Naive thymus-derived CD4-positive, alpha-beta T cell (primary cell): ENCODE measurements at regions of chr1 and their contacts with region 1.

Region 1: DNA sequence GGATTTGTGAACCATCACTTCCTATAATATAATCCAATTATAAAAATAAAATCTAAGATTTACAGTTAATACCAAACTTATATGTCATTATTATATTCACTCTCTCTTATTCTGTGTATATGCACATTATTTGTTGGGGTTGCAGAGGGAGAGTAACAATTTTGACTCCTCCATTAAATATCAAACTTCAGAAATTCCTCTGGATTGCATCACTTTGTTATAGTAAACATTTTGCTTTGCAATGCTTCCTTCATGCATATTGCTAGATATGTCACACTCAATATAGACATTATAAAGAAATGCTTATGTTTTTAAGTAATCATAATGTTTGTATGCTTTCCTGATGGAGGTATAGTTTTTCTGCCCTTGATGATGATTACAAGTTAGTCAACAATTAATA is 999.0 kb upstream of the ADGRL2 start:
- DNase-seq: no peak
- ATAC-seq: no peak
- H3K4me3 ChIP-seq: no peak overlapping the region
- H3K4me3 Mint-ChIP-seq: no peak overlapping the region
- H3K27ac ChIP-seq: no peak overlapping the region
- H3K27ac Mint-ChIP-seq: no peak overlapping the region
- H3K4me1 ChIP-seq: no peaks in the 10 kb centered on the region
- H3K4me1 Mint-ChIP-seq: no peaks in the 10 kb centered on the region
- H3K27me3 ChIP-seq: no peaks in the 10 kb centered on the region
- H3K27me3 Mint-ChIP-seq: no peaks in the 10 kb centered on the region

Region 2: GRCh38 chr1:80827666-80828065 is 26.0 kb after region 1 on chr1:
- CTCF ChIA-PET with region 1: no interaction called
- POLR2A ChIA-PET with region 1: no interaction called
- intact Hi-C with region 1: no loop called
- DNase-seq: no peak
- ATAC-seq: no peak
- H3K4me3 ChIP-seq: no peak overlapping the region
- H3K4me3 Mint-ChIP-seq: no peak overlapping the region
- H3K27ac ChIP-seq: no peak overlapping the region
- H3K27ac Mint-ChIP-seq: no peak overlapping the region
- H3K4me1 ChIP-seq: no peaks in the 10 kb centered on the region
- H3K4me1 Mint-ChIP-seq: no peaks in the 10 kb centered on the region
- H3K27me3 ChIP-seq: no peaks in the 10 kb centered on the region
- H3K27me3 Mint-ChIP-seq: no peaks in the 10 kb centered on the region

Region 3: GRCh38 chr1:80846963-80847362 is 45.3 kb after region 1 on chr1:
- CTCF ChIA-PET with region 1: no interaction called
- POLR2A ChIA-PET with region 1: no interaction called
- intact Hi-C with region 1: loop called in 1 of 2 experiments (anchors 5 kb)
- DNase-seq: no peak
- ATAC-seq: no peak
- H3K4me3 ChIP-seq: no peak overlapping the region
- H3K4me3 Mint-ChIP-seq: no peak overlapping the region
- H3K27ac ChIP-seq: no peak overlapping the region
- H3K27ac Mint-ChIP-seq: no peak overlapping the region
- H3K4me1 ChIP-seq: no peaks in the 10 kb centered on the region
- H3K4me1 Mint-ChIP-seq: no peaks in the 10 kb centered on the region
- H3K27me3 ChIP-seq: no peaks in the 10 kb centered on the region
- H3K27me3 Mint-ChIP-seq: no peaks in the 10 kb centered on the region